GM12878 (cell line): ENCODE measurements at regions of chr17 and their contacts with region 1.

Region 1: GRCh38 chr17:50478391-50479381 is at the start of gene RSAD1:
- DNase-seq: peak; percentile 60
- ATAC-seq: peak; percentile 93
- H3K4me3 ChIP-seq: peak within 1 kb of the TSS; percentile 80
- H3K27ac ChIP-seq: peak within 1 kb of the TSS; percentile 38
- H3K4me1 ChIP-seq: no peaks in the 10 kb centered on the region
- H3K27me3 ChIP-seq: no peaks in the 10 kb centered on the region
- CTCF ChIP-seq: peak; percentile 71 to 87 (median 73)
- EP300 ChIP-seq: no peak
- POLR2A ChIP-seq: peak; percentile 96
- RAD21 ChIP-seq: peak; percentile 54
- polyA plus RNA-seq, gene RSAD1: 2.5 to 6.2 TPM

Region 2: GRCh38 chr17:50345432-50346312 is 133.0 kb before region 1 on chr17 and contains the start of gene XYLT2:
- CTCF ChIA-PET with region 1: no interaction called
- POLR2A ChIA-PET with region 1: no interaction called
- RAD21 ChIA-PET with region 1: no interaction called
- SMC1A ChIA-PET with region 1: no interaction called
- in situ Hi-C with region 1: no loop called
- intact Hi-C with region 1: loop called (anchors 5 kb)
- DNase-seq: no peak
- ATAC-seq: peak; percentile 90
- H3K4me3 ChIP-seq: peak within 1 kb of the TSS; percentile 85
- H3K27ac ChIP-seq: peak within 1 kb of the TSS; percentile 59
- H3K4me1 ChIP-seq: peaks cover 3% of the 10 kb centered on the region
- H3K27me3 ChIP-seq: no peaks in the 10 kb centered on the region
- CTCF ChIP-seq: no peak
- EP300 ChIP-seq: no peak
- POLR2A ChIP-seq: peak; percentile 99
- RAD21 ChIP-seq: no peak
- polyA plus RNA-seq, gene XYLT2: 0.82 to 1.5 TPM

Region 3: DNA sequence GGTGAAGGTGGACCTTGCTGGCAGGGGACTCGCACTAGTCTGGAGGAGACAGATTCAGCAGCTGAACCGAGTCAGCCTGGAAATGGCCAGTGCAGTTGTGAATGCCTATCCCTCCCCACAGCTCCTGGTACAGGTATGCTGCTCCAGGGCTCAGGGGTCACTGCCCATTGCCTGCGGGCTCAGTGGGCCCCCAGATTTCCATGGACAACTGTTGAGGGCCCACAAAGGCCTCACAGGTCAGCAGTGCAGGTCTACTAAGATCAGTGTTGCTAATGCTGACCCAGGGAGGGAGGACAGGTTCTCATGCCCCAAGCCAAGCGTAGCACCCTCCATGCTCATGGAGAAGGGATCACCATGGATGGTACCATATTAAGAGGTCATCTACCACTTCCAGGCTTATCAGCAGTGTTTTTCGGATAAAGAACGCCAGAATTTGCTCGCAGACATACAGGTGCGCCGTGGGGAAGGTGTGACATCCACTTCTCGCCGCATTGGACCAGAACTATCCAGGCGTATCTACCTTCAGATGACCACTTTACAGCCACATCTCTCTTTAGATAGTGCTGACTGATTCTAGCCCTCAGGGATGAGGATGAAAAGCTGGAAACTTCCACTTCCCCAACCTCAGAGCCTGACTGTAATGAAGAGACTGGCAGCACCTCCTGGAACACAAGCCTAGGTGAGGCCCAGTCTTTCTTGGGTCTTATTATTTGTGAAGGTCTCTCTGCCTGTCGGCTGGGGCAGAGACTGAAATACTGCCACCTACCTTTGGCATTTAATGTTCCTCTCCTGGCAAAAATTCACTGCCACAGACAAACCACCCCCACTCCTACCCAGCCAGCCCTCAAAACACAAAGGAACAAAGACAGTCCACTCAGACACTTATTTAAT is 98.1 kb before region 1 on chr17:
- CTCF ChIA-PET with region 1: no interaction called
- POLR2A ChIA-PET with region 1: no interaction called
- RAD21 ChIA-PET with region 1: no interaction called
- SMC1A ChIA-PET with region 1: no interaction called
- in situ Hi-C with region 1: no loop called
- intact Hi-C with region 1: no loop called
- DNase-seq: no peak
- ATAC-seq: peak; percentile 36
- H3K4me3 ChIP-seq: no peak overlapping the region
- H3K27ac ChIP-seq: no peak overlapping the region
- H3K4me1 ChIP-seq: no peaks in the 10 kb centered on the region
- H3K27me3 ChIP-seq: no peaks in the 10 kb centered on the region
- CTCF ChIP-seq: 0 out of 6 replicates have a peak, but pooled peaks of 1 of the 3 experiments have one; percentile 8
- EP300 ChIP-seq: no peak
- POLR2A ChIP-seq: 0 out of 2 replicates have a peak, but pooled peaks have one; percentile 70
- RAD21 ChIP-seq: no peak

Region 4: DNA sequence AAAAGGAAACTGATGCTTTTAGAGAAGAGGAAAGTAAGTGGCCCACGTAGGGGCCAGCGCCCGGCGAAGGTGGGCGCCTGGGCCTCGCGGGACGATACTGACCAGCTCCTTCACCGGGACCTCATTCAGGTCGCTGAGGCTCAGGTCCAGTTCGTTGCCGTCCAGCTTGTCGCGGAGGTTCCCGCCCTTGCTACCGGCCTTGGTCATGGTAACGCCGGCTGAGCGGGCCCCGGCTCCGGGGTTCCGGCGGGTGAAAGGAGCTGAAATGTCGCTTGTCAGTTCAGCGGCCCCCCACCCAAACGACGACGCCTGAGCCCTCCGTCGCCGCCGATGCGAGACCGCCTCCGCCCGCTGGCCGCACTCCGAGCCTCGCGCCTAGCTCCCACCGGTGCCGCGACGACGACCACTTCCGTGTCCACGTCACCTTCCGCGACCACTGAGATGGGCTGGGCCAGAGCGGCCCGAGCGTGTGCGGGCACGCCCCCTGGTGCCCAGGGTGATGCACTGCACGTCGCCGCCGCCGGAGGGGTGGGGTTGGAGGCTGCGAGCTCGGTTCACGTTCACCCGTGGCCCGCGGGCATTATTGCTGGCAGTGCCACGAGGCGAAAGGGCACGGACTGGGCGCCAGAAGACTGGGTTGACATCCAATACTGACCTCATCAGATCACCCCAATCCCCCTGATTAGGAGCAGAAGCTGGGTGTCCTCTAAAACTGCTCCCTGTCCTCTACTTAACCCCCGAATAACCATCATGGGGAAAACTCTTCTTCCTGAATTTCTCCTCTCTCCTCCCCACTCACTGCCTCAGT is 81.4 kb before region 1 on chr17 and contains the start of gene LRRC59:
- CTCF ChIA-PET with region 1: interaction called, 22 read pairs
- POLR2A ChIA-PET with region 1: interaction called, 7 read pairs
- RAD21 ChIA-PET with region 1: interaction called, 16 read pairs
- SMC1A ChIA-PET with region 1: interaction called, 11 read pairs
- in situ Hi-C with region 1: no loop called
- intact Hi-C with region 1: loop called (anchors 1 kb)
- DNase-seq: peak; percentile 55
- ATAC-seq: peak; percentile 97
- H3K4me3 ChIP-seq: peak within 1 kb of the TSS; percentile 93
- H3K27ac ChIP-seq: peak within 1 kb of the TSS; percentile 81
- H3K4me1 ChIP-seq: peaks cover 5% of the 10 kb centered on the region
- H3K27me3 ChIP-seq: no peaks in the 10 kb centered on the region
- CTCF ChIP-seq: peak; percentile 99; a peak in 5 of 6 replicates
- EP300 ChIP-seq: 0 out of 4 replicates have a peak, but pooled peaks of 1 of the 2 experiments have one; percentile 42
- POLR2A ChIP-seq: peak; percentile 100
- RAD21 ChIP-seq: peak; percentile 43
- polyA plus RNA-seq, gene LRRC59: 8.8 to 17.9 TPM

Region 5: DNA sequence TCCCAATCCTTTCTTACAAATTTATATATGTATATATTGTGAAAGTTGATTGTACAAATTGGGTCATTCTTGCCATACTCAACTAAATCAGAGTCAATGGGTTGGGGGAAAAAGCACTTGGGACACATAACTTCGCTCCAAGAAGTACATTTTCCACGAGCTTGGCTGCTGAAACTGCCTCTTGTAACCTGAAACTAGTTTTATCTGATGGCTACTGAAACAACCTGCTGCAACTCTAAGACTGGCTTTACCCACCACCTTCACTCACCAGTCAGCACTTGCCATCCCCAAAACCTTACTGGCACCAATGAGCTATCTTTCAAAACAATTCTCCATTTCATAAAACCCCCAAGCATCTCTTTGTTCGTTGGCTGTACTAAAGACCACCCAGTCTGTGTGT is 15.1 kb after region 1 on chr17:
- CTCF ChIA-PET with region 1: interaction called, 12 read pairs
- POLR2A ChIA-PET with region 1: interaction called, 4 read pairs
- RAD21 ChIA-PET with region 1: interaction called, 6 read pairs
- SMC1A ChIA-PET with region 1: interaction called, 4 read pairs
- in situ Hi-C with region 1: no loop called
- intact Hi-C with region 1: no loop called
- DNase-seq: no peak
- ATAC-seq: no peak
- H3K4me3 ChIP-seq: no peak overlapping the region
- H3K27ac ChIP-seq: no peak overlapping the region
- H3K4me1 ChIP-seq: no peaks in the 10 kb centered on the region
- H3K27me3 ChIP-seq: no peaks in the 10 kb centered on the region
- CTCF ChIP-seq: no peak
- EP300 ChIP-seq: no peak
- POLR2A ChIP-seq: no peak
- RAD21 ChIP-seq: no peak

Region 6: GRCh38 chr17:50508573-50509470 is 30.1 kb after region 1 on chr17:
- CTCF ChIA-PET with region 1: interaction called, 19 read pairs
- POLR2A ChIA-PET with region 1: no interaction called
- RAD21 ChIA-PET with region 1: interaction called, 5 read pairs
- SMC1A ChIA-PET with region 1: interaction called, 5 read pairs
- in situ Hi-C with region 1: no loop called
- intact Hi-C with region 1: no loop called
- DNase-seq: no peak
- ATAC-seq: peak; percentile 2; the same call in 2 of the 3 replicates
- H3K4me3 ChIP-seq: peak overlapping the region; percentile 74
- H3K27ac ChIP-seq: peak overlapping the region; percentile 58
- H3K4me1 ChIP-seq: peaks cover 23% of the 10 kb centered on the region
- H3K27me3 ChIP-seq: no peaks in the 10 kb centered on the region
- CTCF ChIP-seq: no peak
- EP300 ChIP-seq: no peak
- POLR2A ChIP-seq: no peak
- RAD21 ChIP-seq: no peak

Region 7: DNA sequence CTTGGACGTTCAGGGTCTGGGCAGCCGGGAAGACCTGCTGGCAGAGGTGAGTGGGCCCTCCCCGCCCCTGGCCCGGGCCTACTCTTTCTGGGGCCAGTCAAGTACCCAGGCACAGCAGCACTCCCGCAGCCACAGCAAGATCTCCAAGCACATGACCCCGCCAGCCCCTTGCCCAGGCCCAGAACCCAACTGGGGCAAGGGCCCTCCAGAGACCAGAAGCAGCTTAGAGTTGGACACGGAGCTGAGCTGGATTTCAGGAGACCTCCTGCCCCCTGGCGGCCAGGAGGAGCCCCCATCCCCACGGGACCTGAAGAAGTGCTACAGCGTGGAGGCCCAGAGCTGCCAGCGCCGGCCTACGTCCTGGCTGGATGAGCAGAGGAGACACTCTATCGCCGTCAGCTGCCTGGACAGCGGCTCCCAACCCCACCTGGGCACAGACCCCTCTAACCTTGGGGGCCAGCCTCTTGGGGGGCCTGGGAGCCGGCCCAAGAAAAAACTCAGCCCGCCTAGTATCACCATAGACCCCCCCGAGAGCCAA is 147.4 kb after region 1 on chr17:
- CTCF ChIA-PET with region 1: interaction called, 9 read pairs
- POLR2A ChIA-PET with region 1: no interaction called
- RAD21 ChIA-PET with region 1: interaction called, 4 read pairs
- SMC1A ChIA-PET with region 1: interaction called, 7 read pairs
- in situ Hi-C with region 1: loop called (anchors 10 kb)
- intact Hi-C with region 1: loop called (anchors 1 kb)
- DNase-seq: no peak
- ATAC-seq: peak; percentile 90
- H3K4me3 ChIP-seq: no peak overlapping the region
- H3K27ac ChIP-seq: no peak overlapping the region
- H3K4me1 ChIP-seq: no peaks in the 10 kb centered on the region
- H3K27me3 ChIP-seq: peaks cover 0 to 1% of the 10 kb centered on the region in 2 experiments; a peak in 2 of 4 replicates
- CTCF ChIP-seq: peak; percentile 57 to 83 (median 73)
- EP300 ChIP-seq: no peak
- POLR2A ChIP-seq: no peak
- RAD21 ChIP-seq: peak; percentile 73